Endothelial cell of umbilical vein (primary cell): ENCODE measurements at regions of chr2 and their contacts with region 1.

Region 1: DNA sequence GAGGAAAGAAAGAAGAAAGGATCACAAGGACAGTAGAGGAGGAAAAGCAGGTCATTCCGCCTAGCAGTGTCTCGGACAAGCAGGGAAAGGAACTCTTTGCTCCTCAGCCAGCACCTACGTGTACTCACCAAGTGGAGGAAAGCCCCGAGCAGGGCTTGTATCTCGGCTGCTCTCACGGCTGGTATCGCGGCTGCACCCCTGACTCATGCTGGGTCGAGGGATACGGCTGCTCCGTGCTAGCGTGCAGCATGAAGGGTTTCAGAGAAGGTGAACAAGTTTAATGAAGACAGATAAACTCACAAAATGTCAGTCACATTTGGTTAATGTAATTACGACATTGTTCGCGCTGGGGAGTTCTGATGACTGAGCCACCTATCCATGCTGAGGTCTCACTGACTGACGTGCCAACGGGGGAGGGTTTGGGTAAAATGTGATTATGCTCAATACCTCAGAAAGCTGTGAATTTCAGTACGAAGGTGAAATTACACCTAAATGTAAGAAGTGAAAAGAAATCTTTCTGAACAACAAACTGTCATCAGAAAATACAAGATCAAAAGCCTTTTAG is 112.1 kb upstream of the RNU4ATAC start:
- DNase-seq: no peak
- H3K4me3 ChIP-seq: no peak overlapping the region
- H3K27ac ChIP-seq: no peak overlapping the region
- H3K4me1 ChIP-seq: no peaks in the 10 kb centered on the region
- H3K27me3 ChIP-seq: no peaks in the 10 kb centered on the region
- CTCF ChIP-seq: no peak
- POLR2A ChIP-seq: no peak

Region 2: GRCh38 chr2:121479882-121480522 is 61.4 kb after region 1 on chr2:
- CTCF ChIA-PET with region 1: no interaction called
- POLR2A ChIA-PET with region 1: no interaction called
- dilution Hi-C with region 1: no loop called
- intact Hi-C with region 1: loop called (anchors 5 kb)
- DNase-seq: peak; percentile 44
- H3K4me3 ChIP-seq: no peak overlapping the region
- H3K27ac ChIP-seq: no peak overlapping the region
- H3K4me1 ChIP-seq: no peaks in the 10 kb centered on the region
- H3K27me3 ChIP-seq: no peaks in the 10 kb centered on the region
- CTCF ChIP-seq: peak in 1 of 2 donors; percentile 24
- POLR2A ChIP-seq: no peak